Endothelial cell of umbilical vein (primary cell): ENCODE measurements at regions of chr7 and their contacts with region 1.

Region 1: DNA sequence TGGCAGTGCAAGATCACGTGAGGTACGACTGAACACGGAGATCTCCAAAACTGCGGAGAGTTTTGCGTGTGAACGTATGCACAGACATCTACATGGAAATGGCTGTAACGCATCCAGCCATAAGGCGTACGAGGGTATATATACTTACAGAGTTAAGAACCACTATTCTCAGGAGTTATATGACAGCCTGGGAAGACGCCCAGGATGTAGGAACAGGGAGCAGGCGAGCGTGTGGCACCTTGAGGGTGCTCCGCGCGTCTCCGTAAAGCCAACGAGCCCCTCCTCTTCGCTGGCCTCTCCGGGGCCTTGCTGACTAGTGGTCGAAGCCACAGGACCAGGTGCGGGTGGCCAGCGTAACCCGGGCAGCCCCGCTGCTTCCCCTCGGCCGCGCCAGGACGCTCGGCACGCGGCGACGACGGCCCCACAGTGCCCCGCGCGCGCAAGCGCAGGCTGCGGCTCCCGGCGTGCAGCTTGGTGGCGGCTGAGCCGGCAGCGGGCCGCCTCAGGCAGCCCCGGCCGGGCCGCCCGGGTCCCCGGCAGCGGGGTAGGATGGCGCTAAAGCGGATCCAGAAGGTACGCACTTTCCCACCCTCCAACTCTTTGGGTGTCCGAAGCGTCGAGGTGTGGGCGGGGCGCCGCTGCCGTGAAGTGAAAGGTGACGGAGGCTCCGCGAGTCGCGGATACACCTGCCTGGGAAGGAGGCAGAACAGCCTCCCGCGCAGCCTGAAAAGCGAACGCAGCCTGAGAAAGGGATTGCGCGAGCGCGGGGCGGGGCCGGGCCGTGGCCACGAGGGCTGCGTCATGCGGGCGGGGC is at the start of gene UBE2D4:
- DNase-seq: peak; percentile 82
- H3K4me3 ChIP-seq: peak within 1 kb of the TSS; percentile 17 to 70 (median 46)
- H3K27ac ChIP-seq: peak within 1 kb of the TSS; percentile 1
- H3K4me1 ChIP-seq: peaks cover 3% of the 10 kb centered on the region
- H3K27me3 ChIP-seq: no peaks in the 10 kb centered on the region
- CTCF ChIP-seq: no peak
- POLR2A ChIP-seq: peak; percentile 81
- total RNA-seq, gene UBE2D4: 11.3 and 11.7 TPM in 2 replicates

Region 2: GRCh38 chr7:43856996-43857395 is 69.2 kb before region 1 on chr7:
- CTCF ChIA-PET with region 1: no interaction called
- POLR2A ChIA-PET with region 1: no interaction called
- dilution Hi-C with region 1: no loop called
- intact Hi-C with region 1: no loop called
- DNase-seq: no peak
- H3K4me3 ChIP-seq: no peak overlapping the region
- H3K27ac ChIP-seq: no peak overlapping the region
- H3K4me1 ChIP-seq: no peaks in the 10 kb centered on the region
- H3K27me3 ChIP-seq: peaks cover 0 to 6% of the 10 kb centered on the region in 2 experiments
- CTCF ChIP-seq: no peak
- POLR2A ChIP-seq: no peak

Region 3: GRCh38 chr7:43879477-43879876 is 46.7 kb before region 1 on chr7:
- CTCF ChIA-PET with region 1: no interaction called
- POLR2A ChIA-PET with region 1: no interaction called
- dilution Hi-C with region 1: no loop called
- intact Hi-C with region 1: loop called (anchors 1 kb)
- DNase-seq: peak; percentile 77
- H3K4me3 ChIP-seq: no peak overlapping the region
- H3K27ac ChIP-seq: peak overlapping the region; percentile 58
- H3K4me1 ChIP-seq: peaks cover 30% of the 10 kb centered on the region
- H3K27me3 ChIP-seq: no peaks in the 10 kb centered on the region
- CTCF ChIP-seq: no peak
- POLR2A ChIP-seq: no peak

Region 4: GRCh38 chr7:43895847-43896415 is 30.3 kb before region 1 on chr7:
- CTCF ChIA-PET with region 1: no interaction called
- POLR2A ChIA-PET with region 1: no interaction called
- dilution Hi-C with region 1: no loop called
- intact Hi-C with region 1: no loop called
- DNase-seq: no peak
- H3K4me3 ChIP-seq: no peak overlapping the region
- H3K27ac ChIP-seq: no peak overlapping the region
- H3K4me1 ChIP-seq: peaks cover 6% of the 10 kb centered on the region
- H3K27me3 ChIP-seq: no peaks in the 10 kb centered on the region
- CTCF ChIP-seq: no peak
- POLR2A ChIP-seq: no peak